Activated CD8-positive, alpha-beta T cell treated with anti-CD3 and anti-CD28 coated beads, Interleukin-2, amount 10 ng/mL, durations not matched to agents 7 days and 5 days (primary cell): ENCODE measurements at regions of chr5 and their contacts with region 1.

Region 1: DNA sequence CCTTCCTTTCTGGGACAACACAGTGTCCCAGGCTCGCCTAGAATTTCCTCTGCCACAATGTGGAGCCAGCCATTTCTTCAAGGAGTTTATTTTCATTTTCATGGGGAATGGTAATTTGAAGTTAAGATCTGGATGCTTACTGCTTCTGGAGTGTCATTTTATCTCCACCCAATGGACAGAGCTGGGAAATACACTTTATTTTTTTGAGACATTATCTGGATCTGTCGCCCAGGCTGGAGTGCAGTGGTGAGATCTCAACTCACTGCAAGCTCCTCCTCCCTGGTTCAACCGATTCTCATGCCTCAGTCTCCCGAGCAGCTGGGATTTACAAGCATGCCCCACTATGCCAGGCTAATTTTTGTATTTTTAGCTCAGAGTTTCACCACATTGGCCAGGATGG is 12.7 kb upstream of the THG1L start:
- DNase-seq: peak; percentile 34
- ATAC-seq: peak; percentile 92
- H3K4me3 Mint-ChIP-seq: no peak overlapping the region
- H3K27ac Mint-ChIP-seq: peak overlapping the region; percentile 66
- H3K4me1 Mint-ChIP-seq: peaks cover 26% of the 10 kb centered on the region
- H3K27me3 Mint-ChIP-seq: peaks cover under 1% of the 10 kb centered on the region

Region 2: GRCh38 chr5:157342822-157343402 is 375.6 kb before region 1 on chr5:
- CTCF ChIA-PET with region 1: interaction called, 22 read pairs
- POLR2A ChIA-PET with region 1: no interaction called
- DNase-seq: peak; percentile 48
- ATAC-seq: peak; percentile 60
- H3K4me3 Mint-ChIP-seq: no peak overlapping the region
- H3K27ac Mint-ChIP-seq: no peak overlapping the region
- H3K4me1 Mint-ChIP-seq: peaks cover 5% of the 10 kb centered on the region
- H3K27me3 Mint-ChIP-seq: no peaks in the 10 kb centered on the region

Region 3: GRCh38 chr5:157471709-157472108 is 246.8 kb before region 1 on chr5:
- CTCF ChIA-PET with region 1: interaction called, 34 read pairs
- POLR2A ChIA-PET with region 1: no interaction called
- DNase-seq: peak; percentile 32
- ATAC-seq: no peak
- H3K4me3 Mint-ChIP-seq: no peak overlapping the region
- H3K27ac Mint-ChIP-seq: no peak overlapping the region
- H3K4me1 Mint-ChIP-seq: no peaks in the 10 kb centered on the region
- H3K27me3 Mint-ChIP-seq: no peaks in the 10 kb centered on the region

Region 4: DNA sequence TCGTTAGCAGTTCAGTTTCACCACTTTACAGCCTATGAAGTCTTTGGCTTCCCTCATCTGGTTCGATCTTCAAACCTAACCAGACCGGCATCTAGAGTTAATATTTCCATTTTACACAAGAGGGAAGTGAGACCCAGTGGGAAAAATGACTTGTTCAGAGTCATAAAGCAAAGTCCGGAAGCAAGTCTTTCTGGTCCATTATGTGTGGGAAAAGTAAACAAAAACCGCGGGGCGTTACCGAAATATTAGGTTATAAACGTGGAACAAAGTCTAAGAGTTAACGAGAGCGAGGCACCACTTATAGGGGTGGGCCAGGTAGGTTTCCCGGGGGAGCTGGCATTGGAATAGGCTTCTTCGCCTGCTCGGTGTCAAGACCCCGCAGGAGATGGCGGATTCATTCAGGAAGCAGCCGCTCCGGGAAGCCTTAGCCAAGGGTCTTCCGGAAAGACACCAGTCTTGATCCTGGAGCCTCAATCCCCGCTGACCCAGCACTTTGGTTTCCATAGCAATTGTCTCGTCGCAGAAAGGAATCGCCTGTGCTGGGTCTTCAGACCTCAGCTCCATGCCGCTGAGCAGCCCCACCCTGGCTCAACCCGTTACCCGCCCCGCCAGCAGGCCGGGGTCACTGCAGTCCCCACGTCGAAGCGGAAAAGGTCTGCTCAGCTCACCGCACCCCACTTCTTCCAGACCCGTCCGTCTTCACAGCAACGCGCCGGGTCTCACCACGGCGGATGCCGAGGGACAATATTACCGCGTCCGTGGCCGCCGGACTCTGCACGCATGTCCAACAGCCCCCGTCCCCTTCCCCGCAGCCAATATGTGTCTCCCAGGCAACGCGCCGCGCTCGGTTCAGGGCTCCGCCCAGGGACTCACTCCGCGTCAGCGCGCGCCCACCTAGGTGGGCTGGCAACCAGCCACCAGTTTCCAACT is 47.6 kb before region 1 on chr5 and contains the start of gene C5orf52:
- CTCF ChIA-PET with region 1: interaction called, 11 read pairs
- POLR2A ChIA-PET with region 1: no interaction called
- DNase-seq: peak; percentile 33
- ATAC-seq: peak; percentile 64
- H3K4me3 Mint-ChIP-seq: peak within 1 kb of the TSS; percentile 82
- H3K27ac Mint-ChIP-seq: peak within 1 kb of the TSS; percentile 42
- H3K4me1 Mint-ChIP-seq: peaks cover 25% of the 10 kb centered on the region
- H3K27me3 Mint-ChIP-seq: peaks cover 34% of the 10 kb centered on the region
- total RNA-seq, gene C5orf52: not detected

Region 5: DNA sequence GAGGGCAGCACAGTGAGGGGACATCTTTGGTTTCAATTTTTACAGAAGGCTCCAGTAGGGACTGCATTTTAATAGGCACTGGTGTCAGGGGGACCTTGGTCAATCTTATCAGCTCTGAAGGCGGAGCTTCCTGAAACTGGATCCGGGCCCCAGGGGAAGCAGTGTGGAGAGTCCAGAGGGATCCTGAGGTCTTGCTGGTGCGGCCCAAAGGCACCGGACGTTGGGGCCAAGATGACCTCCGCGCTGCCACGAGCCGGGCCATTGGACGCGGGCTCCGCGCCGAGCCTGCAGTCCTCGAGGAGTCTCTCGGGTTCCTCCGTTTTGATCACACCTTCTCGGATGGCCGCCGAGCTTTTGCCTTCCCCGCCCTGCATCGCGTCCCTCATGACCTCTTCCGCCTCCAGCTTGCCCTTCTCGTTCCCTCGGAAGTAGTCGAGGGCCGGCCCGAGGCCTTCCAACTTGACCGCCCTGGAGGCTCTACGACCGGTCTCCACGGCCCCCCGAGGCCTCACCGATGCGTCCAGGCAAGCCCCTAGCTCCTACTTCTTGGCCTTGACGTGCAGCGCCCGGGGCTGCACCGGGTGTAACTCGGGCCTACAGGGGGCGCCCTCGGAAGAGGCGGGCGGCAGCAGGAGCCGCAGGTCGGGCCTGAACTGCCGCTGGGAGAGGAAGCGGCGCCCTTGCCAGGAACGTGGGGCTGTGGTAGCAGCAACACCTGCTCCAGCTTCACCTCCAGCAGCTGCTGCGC is 28.4 kb before region 1 on chr5:
- CTCF ChIA-PET with region 1: no interaction called
- POLR2A ChIA-PET with region 1: no interaction called
- DNase-seq: no peak
- ATAC-seq: no peak
- H3K4me3 Mint-ChIP-seq: no peak overlapping the region
- H3K27ac Mint-ChIP-seq: no peak overlapping the region
- H3K4me1 Mint-ChIP-seq: no peaks in the 10 kb centered on the region
- H3K27me3 Mint-ChIP-seq: no peaks in the 10 kb centered on the region

Region 6: GRCh38 chr5:157778121-157778805 is 59.7 kb after region 1 on chr5:
- CTCF ChIA-PET with region 1: no interaction called
- POLR2A ChIA-PET with region 1: no interaction called
- DNase-seq: no peak
- ATAC-seq: no peak
- H3K4me3 Mint-ChIP-seq: no peak overlapping the region
- H3K27ac Mint-ChIP-seq: no peak overlapping the region
- H3K4me1 Mint-ChIP-seq: peaks cover 3% of the 10 kb centered on the region
- H3K27me3 Mint-ChIP-seq: peaks cover 6% of the 10 kb centered on the region

Region 7: GRCh38 chr5:157941616-157942015 is 223.1 kb after region 1 on chr5:
- CTCF ChIA-PET with region 1: no interaction called
- POLR2A ChIA-PET with region 1: no interaction called
- DNase-seq: no peak
- ATAC-seq: no peak
- H3K4me3 Mint-ChIP-seq: no peak overlapping the region
- H3K27ac Mint-ChIP-seq: no peak overlapping the region
- H3K4me1 Mint-ChIP-seq: no peaks in the 10 kb centered on the region
- H3K27me3 Mint-ChIP-seq: no peaks in the 10 kb centered on the region